ENCODE measurements at regions of chr3 and their contacts with region 1.

Region 1: DNA sequence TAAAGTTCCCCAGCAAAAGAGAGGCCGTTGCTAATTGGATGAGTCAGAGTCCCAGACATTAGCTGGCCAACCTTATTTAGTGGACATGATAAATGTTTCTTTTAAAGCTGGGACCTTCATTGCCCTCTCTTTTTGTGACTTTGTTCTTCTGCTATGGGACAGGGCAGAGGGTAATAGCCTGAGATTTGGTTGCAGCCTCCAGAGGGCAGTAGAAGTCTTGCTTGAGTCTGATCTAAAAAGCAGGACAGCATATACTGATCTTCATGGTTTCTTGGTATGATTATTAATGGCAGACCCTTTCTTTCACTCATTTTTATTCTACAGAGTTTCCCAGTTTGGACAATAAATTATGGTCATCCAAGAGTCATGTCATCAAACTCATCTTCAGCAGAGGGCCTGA is 25.1 kb upstream of the ZKSCAN7 start:
- DNase-seq: peak; percentile 23
- ATAC-seq: no peak
- H3K4me3 ChIP-seq: no peak overlapping the region
- H3K27ac ChIP-seq: no peak overlapping the region
- H3K4me1 ChIP-seq: no peaks in the 10 kb centered on the region
- H3K27me3 ChIP-seq: peaks cover 12% of the 10 kb centered on the region; the same call in 1 of the 2 replicates
- CTCF ChIP-seq: peak; percentile 39
- POLR2A ChIP-seq: no peak
- RAD21 ChIP-seq: peak; percentile 33

Region 2: DNA sequence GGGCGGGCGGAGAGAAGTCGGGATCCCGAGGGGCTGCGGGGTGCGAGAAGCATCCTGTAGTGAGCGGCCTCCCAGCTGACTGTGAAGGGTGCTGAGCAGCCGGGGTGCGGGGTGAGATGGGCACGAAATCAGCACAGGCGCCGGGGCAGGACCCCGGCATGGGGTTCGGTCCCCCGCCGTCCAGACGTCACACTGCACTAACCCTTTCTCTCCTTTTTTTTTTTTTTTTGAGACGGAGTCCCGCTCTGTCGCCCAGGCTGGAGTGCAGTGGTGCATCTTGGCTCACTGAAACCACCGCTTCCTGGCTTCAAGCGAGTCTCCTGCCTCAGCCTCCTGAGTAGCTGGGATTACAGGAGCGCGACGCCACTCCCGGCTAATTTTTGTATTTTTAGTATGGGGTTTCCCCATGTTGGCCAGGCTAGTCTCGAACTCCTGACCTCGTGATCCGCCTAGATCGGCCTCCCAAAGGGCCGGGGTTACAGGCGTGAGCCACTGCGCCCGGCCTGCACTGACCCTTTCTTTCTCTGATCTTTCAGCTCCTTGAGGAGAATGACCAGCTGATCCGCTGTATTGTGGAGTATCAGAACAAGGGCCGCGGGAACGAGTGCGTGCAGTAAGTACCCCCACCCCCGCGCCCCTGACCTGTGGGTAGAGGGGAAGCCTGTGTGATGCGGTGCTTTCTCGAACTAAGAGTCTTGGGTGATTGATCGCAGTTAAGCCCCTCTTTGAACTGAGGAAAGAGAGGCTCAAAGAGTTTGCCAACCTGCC is 1938.8 kb before region 1 on chr3:
- CTCF ChIA-PET with region 1: no interaction called
- POLR2A ChIA-PET with region 1: no interaction called
- dilution Hi-C with region 1: no loop called
- in situ Hi-C with region 1: no loop called
- intact Hi-C with region 1: no loop called
- DNase-seq: no peak
- ATAC-seq: peak; percentile 37
- H3K4me3 ChIP-seq: peak overlapping the region; percentile 67
- H3K27ac ChIP-seq: peak overlapping the region; percentile 38
- H3K4me1 ChIP-seq: peaks cover 6% of the 10 kb centered on the region
- H3K27me3 ChIP-seq: no peaks in the 10 kb centered on the region
- CTCF ChIP-seq: no peak
- POLR2A ChIP-seq: no peak
- RAD21 ChIP-seq: no peak

Region 3: DNA sequence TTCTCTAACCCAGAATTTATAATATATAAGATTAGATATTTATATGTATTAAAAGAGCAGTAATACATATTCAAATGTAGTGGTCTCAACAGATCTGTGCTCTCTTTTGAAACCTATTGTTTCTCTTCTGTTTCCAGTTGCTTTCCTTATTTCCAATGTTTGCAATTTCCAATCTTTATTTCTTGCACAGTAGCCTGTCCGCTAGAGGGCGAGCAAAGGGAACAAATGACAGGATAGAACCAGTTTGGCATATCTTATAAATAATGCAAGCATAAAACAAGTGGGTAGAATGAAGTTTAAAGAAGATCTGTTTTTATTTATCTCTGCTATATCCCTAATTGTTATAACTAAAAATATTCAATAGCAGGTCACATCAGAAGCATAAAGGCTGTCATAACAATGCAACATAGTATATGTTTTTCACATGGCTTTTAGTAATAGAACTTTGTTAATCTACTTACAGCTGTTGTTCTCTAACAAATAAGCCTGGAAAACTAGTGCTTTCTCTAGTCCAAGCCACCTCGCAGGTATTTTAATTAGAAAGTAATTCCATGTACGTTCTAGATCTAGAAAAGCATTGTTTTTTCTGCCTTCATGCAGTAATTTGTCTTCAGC is 206.5 kb before region 1 on chr3:
- CTCF ChIA-PET with region 1: no interaction called
- POLR2A ChIA-PET with region 1: no interaction called
- dilution Hi-C with region 1: no loop called
- in situ Hi-C with region 1: no loop called
- intact Hi-C with region 1: loop called (anchors 5 kb)
- DNase-seq: peak; percentile 71
- ATAC-seq: peak; percentile 86
- H3K4me3 ChIP-seq: no peak overlapping the region
- H3K27ac ChIP-seq: no peak overlapping the region
- H3K4me1 ChIP-seq: no peaks in the 10 kb centered on the region
- H3K27me3 ChIP-seq: peaks cover 3% of the 10 kb centered on the region; the same call in 1 of the 2 replicates
- CTCF ChIP-seq: peak; percentile 88
- POLR2A ChIP-seq: no peak
- RAD21 ChIP-seq: peak; percentile 86

Region 4: DNA sequence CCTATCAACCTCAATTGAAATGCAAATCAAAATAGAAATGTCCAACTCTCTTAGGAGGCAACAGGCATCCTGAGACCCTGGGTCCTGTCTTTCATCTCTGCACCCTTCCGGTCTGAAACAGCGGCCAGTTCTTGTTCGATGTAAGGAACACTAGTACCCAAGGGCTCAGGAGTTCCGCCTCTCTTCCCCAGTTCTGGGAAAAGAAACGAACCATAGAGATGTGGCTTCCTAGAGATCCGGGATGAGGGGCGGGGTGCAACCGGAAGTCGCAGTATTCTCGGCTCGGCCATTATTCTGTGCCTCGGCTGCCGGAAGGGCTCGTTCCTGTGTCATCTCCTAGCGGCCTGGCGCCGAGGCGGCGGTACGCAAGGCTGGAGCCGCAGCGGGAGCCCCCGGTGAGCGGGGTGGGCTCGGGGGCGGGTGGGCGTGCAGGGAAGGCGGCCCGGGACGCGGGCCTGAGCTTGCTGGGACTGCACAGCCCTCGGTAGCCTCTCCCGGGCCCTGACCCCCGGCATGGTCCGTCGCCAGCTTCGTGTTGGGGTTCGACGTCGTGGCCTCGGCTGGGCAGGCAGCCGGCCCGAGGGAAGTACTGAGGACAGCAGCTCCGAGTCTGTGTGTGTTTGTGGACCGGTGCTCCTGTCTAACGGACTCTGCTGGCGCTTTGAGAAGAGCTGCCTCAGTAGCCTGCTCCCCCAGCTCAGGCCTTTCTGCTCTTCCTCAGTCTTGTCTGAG is 95.0 kb after region 1 on chr3 and contains the start of gene ZNF197:
- CTCF ChIA-PET with region 1: no interaction called
- POLR2A ChIA-PET with region 1: no interaction called
- dilution Hi-C with region 1: no loop called
- in situ Hi-C with region 1: no loop called
- intact Hi-C with region 1: no loop called
- DNase-seq: peak; percentile 90
- ATAC-seq: peak; percentile 95
- H3K4me3 ChIP-seq: peak within 1 kb of the TSS; percentile 90
- H3K27ac ChIP-seq: peak within 1 kb of the TSS; percentile 80
- H3K4me1 ChIP-seq: no peaks in the 10 kb centered on the region
- H3K27me3 ChIP-seq: no peaks in the 10 kb centered on the region
- CTCF ChIP-seq: 0 out of 2 replicates have a peak, but pooled peaks have one; percentile 4
- POLR2A ChIP-seq: peak; percentile 44; the same call in 1 of the 2 replicates
- RAD21 ChIP-seq: no peak; the same call in 1 of the 2 replicates
- total RNA-seq, gene ZNF197: 14.9 and 18.9 TPM in 2 replicates

Region 5: DNA sequence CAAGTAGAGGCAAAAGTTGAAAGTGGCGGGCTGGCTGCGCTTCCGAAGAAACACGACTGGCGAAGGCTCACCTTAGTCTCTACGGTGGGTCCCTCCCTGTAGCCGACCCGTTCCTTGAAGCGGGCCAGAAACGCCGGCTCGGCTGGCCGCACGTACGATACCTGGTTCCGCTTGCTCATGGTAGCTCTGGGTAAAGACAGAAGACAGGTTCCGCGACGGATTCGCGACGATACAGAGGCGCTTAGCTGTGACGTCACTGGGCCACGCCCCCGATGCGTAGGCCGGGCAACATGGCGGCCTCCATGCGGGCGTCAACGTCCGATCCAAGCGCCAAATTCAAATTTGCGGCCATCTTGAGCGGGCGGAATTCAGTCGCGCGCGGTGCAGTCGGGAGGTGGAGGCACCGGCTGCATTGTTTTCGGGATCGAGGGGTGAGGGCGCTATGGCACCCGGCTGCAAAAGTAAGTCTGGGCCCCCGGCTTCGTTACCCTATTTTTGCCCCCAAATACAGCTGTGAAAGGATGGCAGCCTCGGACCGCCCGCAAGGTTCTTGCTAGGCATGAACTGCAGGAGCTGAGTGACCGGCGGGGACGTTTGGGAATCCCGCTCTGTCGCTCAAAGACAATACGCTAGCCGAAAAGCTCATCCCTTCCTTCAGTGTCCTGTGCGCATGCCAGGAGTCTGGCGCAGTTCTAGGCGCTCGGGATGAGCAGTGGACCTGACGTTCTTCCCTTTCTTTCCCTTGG is 231.7 kb after region 1 on chr3 and contains the starts of genes KIAA1143 and KIF15:
- CTCF ChIA-PET with region 1: no interaction called
- POLR2A ChIA-PET with region 1: no interaction called
- dilution Hi-C with region 1: no loop called
- in situ Hi-C with region 1: no loop called
- intact Hi-C with region 1: loop called (anchors 2 kb)
- DNase-seq: peak; percentile 95
- ATAC-seq: peak; percentile 92
- H3K4me3 ChIP-seq: peak within 1 kb of the TSS; percentile 69
- H3K27ac ChIP-seq: peak within 1 kb of the TSS; percentile 47
- H3K4me1 ChIP-seq: no peaks in the 10 kb centered on the region
- H3K27me3 ChIP-seq: no peaks in the 10 kb centered on the region
- CTCF ChIP-seq: no peak
- POLR2A ChIP-seq: peak; percentile 73
- RAD21 ChIP-seq: peak; percentile 3; the same call in 1 of the 2 replicates
- total RNA-seq, gene KIAA1143: 16.8 and 23.9 TPM in 2 replicates
- total RNA-seq, gene KIF15: 8.4 and 10.8 TPM in 2 replicates

Region 6: DNA sequence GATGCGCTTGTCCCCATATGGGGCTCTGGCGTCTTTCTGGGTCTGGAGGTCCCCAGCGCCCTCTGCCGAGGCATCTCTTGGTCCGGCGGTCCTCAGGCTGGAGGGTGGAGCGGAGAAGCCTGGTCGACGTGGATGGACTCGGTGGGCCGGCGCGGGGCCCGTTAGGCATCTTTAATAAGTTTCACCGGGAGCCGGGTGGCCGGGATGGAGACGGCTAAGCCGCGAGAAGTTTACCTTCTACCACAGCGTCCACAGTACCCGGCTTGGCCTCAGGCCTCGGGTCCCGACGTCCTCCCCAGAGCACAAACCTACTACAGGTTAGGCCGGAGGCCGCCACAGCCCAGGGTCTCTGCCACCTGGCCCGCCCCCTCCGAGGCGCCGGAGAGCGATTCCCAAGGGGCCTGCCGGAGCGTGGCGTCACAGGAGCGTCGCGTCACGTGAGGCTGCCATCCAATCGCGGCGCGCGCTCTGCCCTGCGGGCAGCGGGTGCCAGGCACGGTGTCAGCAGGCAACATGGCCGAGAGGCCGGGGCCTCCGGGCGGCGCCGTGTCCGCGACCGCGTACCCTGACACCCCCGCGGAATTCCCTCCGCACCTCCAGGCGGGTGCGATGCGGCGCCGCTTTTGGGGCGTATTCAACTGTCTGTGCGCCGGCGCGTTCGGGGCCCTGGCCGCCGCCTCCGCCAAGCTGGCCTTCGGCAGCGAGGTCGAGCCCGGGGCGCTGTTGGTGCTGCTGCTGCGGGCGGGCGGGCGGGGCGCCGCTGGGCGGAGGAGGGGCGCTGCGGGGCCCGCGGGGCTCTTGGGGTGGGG is 331.7 kb after region 1 on chr3 and contains the start of gene TMEM42:
- CTCF ChIA-PET with region 1: no interaction called
- POLR2A ChIA-PET with region 1: no interaction called
- dilution Hi-C with region 1: no loop called
- in situ Hi-C with region 1: no loop called
- intact Hi-C with region 1: loop called (anchors 1 kb)
- DNase-seq: peak; percentile 90
- ATAC-seq: peak; percentile 98
- H3K4me3 ChIP-seq: peak within 1 kb of the TSS; percentile 72
- H3K27ac ChIP-seq: peak within 1 kb of the TSS; percentile 82
- H3K4me1 ChIP-seq: peaks cover 6% of the 10 kb centered on the region
- H3K27me3 ChIP-seq: no peaks in the 10 kb centered on the region
- CTCF ChIP-seq: peak; percentile 37; the same call in 1 of the 2 replicates
- POLR2A ChIP-seq: peak; percentile 91
- RAD21 ChIP-seq: no peak; the same call in 1 of the 2 replicates
- total RNA-seq, gene TMEM42: 10.3 and 13.1 TPM in 2 replicates

Region 7: DNA sequence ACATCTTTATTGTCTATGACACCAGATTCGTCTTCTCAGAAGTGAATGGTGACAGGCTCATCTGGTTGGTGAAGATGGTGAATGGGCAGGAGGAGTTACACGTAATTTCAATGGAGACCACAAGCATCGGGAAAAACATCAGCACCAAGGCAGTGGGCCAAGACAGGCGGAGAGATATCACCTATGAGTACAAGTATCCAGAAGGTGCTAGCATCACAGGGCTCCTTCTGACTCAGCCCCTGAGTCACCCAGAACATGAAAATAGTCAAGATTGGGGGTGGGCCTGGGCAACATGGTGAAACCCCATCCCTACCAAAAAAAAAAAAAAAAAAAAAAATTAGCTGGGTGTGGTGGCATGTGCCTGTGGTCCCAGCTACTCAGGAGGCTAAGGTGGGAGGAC is 377.1 kb after region 1 on chr3:
- CTCF ChIA-PET with region 1: no interaction called
- POLR2A ChIA-PET with region 1: no interaction called
- dilution Hi-C with region 1: no loop called
- in situ Hi-C with region 1: loop called (anchors 10 kb)
- intact Hi-C with region 1: no loop called
- DNase-seq: peak; percentile 25
- ATAC-seq: no peak
- H3K4me3 ChIP-seq: no peak overlapping the region
- H3K27ac ChIP-seq: no peak overlapping the region
- H3K4me1 ChIP-seq: no peaks in the 10 kb centered on the region
- H3K27me3 ChIP-seq: peaks cover 3% of the 10 kb centered on the region; the same call in 1 of the 2 replicates
- CTCF ChIP-seq: no peak
- POLR2A ChIP-seq: no peak
- RAD21 ChIP-seq: no peak

Region 8: GRCh38 chr3:44913868-44914468 is 384.0 kb after region 1 on chr3:
- CTCF ChIA-PET with region 1: no interaction called
- POLR2A ChIA-PET with region 1: no interaction called
- dilution Hi-C with region 1: no loop called
- in situ Hi-C with region 1: loop called (anchors 10 kb)
- intact Hi-C with region 1: loop called (anchors 1 kb)
- DNase-seq: peak; percentile 69
- ATAC-seq: peak; percentile 82
- H3K4me3 ChIP-seq: no peak overlapping the region
- H3K27ac ChIP-seq: no peak overlapping the region
- H3K4me1 ChIP-seq: no peaks in the 10 kb centered on the region
- H3K27me3 ChIP-seq: no peaks in the 10 kb centered on the region; the same call in 1 of the 2 replicates
- CTCF ChIP-seq: peak; percentile 79
- POLR2A ChIP-seq: no peak
- RAD21 ChIP-seq: peak; percentile 92

Region 9: GRCh38 chr3:45037734-45038455 is 508.0 kb after region 1 on chr3:
- CTCF ChIA-PET with region 1: no interaction called
- POLR2A ChIA-PET with region 1: no interaction called
- dilution Hi-C with region 1: no loop called
- in situ Hi-C with region 1: no loop called
- intact Hi-C with region 1: loop called (anchors 10 kb)
- DNase-seq: peak; percentile 93
- ATAC-seq: peak; percentile 70
- H3K4me3 ChIP-seq: no peak overlapping the region
- H3K27ac ChIP-seq: no peak overlapping the region
- H3K4me1 ChIP-seq: peaks cover 20% of the 10 kb centered on the region
- H3K27me3 ChIP-seq: no peaks in the 10 kb centered on the region
- CTCF ChIP-seq: peak; percentile 98
- POLR2A ChIP-seq: 0 out of 2 replicates have a peak, but pooled peaks have one; percentile 44
- RAD21 ChIP-seq: peak; percentile 98

Measured in IMR-90 (cell line).